Sciatic nerve (tissue), 2 donors: ENCODE measurements at regions of chr2 and their contacts with region 1.

Region 1: DNA sequence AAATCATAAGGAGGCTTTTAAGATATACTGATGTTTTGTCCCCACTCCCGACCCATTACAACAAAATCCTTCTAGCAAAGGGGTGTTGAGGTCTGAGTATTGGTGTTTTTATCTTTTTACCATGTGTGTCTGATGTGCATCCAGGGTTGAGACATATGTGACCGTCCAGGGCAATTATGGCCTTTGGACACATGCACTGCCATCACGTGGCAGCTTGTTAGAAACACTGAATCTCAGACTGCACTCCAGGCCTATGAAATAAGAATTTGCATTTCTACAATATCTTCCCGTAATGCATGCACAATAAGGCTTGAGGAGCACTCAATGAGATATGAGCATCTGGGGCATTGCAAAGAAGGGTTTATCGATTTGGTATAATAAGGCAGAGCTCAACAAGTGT is 235.1 kb upstream of the ZNF804A start:
- DNase-seq: no peak
- ATAC-seq: no peak

Region 2: GRCh38 chr2:184346338-184346862 is 16.8 kb before region 1 on chr2:
- intact Hi-C with region 1: loop called (anchors 1 kb)
- DNase-seq: no peak
- ATAC-seq: no peak

Region 3: GRCh38 chr2:184685999-184686841 is 323.0 kb after region 1 on chr2:
- intact Hi-C with region 1: no loop called
- DNase-seq: no peak
- ATAC-seq: no peak